ENCODE measurements at regions of chr18 and their contacts with region 1.

Region 1: DNA sequence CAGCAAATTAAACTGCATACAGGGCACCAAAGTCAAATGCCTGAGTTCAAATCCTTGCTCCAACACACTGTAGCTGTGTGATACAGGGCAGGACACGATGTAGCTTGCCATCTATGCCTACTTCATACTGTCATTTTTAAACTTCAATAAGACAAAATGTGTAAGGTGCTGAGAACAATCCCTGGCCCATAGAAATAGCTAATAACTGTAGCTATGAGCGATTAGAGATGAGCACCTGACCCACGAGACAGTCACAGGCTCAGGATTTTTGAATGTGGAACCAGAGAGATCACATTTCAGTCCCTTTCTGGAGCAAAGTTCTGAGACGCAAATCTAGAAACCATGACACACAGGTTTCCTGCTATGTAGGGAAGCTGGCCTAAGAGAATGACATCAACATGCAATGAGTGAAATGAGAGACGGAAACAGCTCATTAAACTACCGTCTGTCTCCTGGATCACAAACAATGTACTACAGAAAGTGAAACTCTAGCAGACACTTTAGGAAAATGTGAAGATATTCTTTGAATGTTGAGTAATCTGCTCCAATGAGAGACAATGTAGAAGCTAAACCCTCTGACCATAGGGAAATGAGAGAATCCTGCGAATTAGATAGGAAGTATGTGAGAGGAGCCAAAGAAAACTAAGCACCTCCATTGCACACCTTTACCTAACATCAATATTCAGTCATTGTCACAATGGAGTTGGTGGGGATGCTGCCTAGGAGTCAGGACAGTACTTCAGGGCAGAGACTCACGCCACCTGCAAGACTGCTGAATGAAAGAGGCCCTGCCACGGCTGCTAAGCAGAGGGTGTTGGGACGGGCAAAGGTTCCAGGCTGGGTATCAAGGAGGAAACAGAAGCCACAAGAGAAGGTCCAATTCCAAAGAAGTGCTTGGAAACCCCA is 25.5 kb downstream of the B4GALT6 start:
- DNase-seq: peak; percentile 60

Region 2: GRCh38 chr18:31309115-31309514 is 349.8 kb before region 1 on chr18:
- CTCF ChIA-PET with region 1: no interaction called
- POLR2A ChIA-PET with region 1: no interaction called
- DNase-seq: no peak

Region 3: DNA sequence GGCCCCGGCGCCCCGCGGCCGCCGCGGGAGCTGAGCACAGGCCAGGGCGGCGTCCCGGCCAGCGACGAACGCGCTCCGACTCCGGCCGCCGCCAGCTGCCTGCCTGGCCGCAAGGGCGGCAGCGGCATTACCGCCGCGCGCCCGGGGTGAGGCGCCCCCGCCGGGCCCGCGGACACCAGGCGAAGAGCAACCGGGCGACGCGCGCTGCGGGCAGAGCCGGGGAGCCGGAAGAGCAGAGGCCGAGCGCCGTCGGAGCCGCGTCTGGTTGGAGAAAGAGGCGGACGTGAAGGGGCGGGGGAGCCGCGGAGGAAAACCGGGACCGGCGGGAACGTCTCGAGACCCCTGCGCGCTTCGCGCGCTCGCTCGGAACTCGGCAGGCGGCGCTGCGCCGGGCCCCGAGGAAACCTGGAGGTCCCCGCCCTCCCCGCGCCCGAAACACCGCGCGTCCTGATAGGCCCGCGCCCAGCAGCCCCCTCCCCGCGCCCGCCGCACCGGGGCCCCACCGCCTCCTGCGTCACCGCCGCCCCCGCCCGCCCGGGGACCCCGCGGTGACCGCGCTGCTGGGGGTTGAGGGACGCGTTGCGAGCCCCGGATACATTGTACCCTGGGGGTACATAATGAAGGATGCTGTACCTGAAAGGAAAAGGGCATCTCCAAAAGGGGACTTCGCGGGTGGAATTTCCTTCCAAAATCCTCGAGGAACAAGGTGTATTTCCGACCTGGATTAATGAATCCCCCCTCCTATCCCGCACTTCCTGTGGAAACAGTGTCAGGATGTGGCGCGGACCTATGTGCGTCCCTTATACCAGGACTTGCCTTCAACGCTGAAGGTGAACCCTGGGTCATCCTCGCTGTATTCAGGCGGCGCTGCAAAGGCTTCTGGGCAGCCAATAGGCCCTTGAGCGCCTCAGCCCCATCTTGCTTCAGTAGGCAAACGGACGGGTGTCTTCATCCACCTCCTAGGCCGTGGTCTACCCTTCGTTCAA is 26.5 kb after region 1 on chr18:
- CTCF ChIA-PET with region 1: interaction called, 4 read pairs
- POLR2A ChIA-PET with region 1: interaction called, 10 read pairs
- DNase-seq: peak; percentile 90

Region 4: DNA sequence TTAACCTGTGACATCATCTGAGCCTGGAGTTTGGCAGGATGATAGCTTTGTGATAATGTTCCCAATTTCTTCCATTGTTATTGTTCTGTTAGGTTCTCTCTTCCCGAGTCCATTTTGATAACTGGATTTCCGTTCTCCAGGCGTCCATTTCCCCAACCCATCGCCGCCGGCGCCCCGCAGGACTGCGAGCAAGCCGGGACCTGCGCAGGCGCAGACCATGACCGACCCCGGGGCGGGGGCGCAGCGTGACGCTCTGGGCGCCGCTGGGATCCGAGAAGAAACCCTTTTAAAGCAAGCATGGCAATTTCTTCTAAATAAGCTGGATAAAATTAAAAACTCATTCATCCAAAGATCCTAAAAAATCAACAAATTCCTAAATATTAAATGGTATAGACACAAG is 101.8 kb after region 1 on chr18 and contains the start of gene SLC25A52:
- CTCF ChIA-PET with region 1: no interaction called
- POLR2A ChIA-PET with region 1: no interaction called
- DNase-seq: no peak

Measured in HEK293T (cell line).